PC-9 (cell line): ENCODE measurements at regions of chr10 and their contacts with region 1.

Region 1: DNA sequence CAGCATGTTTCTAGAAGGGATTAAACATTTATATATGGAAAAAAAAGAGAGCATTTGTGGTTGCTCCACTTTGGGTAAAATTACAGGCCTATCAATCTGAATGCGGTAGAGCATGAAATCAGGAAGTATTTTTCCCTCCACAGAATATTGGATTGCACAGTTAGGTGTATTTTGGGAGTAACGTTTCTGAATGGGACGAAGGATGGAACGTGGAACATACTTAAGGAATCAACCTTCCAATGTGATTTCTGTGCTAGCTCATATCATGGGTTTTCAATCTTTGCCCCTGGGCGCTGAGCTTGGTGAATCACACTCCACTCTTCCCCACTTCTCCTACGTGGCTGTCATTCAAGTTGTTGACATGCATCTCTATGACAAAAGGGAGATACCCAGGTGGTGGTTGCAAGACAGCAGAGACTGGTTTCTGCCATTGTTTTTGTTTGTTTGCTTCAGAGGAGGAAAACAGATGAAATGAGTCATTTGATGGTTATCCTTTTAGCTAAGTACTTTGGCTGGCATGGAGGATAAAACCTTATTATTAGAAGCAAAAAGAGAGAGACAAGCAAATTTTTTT is 573.8 kb downstream of the GATA3 start:
- DNase-seq: peak; percentile 88 to 97
- H3K4me3 ChIP-seq: no peak overlapping the region
- H3K27ac ChIP-seq: peak overlapping the region; percentile 88
- H3K4me1 ChIP-seq: peaks cover 25% of the 10 kb centered on the region
- H3K27me3 ChIP-seq: no peaks in the 10 kb centered on the region
- CTCF ChIP-seq: no peak

Region 2: DNA sequence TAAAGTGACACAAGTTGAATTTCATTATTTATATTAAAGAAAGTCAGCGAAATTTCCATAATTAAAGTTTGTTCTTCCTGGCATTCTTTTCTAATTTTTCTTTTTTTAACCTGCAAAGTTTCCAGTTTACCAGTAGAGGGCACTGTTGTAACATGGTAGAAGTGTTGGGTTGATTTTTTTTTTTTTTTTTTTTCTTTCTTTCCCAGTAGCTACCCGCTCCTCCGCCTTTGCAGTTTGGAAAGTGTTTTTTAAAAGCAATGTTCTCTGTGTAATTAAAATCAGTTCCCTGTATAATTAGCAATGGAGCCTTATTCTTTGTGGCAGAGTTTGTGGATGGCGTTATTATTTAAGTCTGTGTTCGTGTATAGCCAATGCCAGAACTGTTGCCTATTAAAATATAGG is 756.2 kb before region 1 on chr10:
- CTCF ChIA-PET with region 1: no interaction called
- POLR2A ChIA-PET with region 1: no interaction called
- intact Hi-C with region 1: loop called (anchors 5 kb)
- DNase-seq: peak in 1 of 2 experiments; percentile 5
- H3K4me3 ChIP-seq: peak overlapping the region; percentile 54; the same call in 1 of the 2 replicates
- H3K27ac ChIP-seq: no peak overlapping the region
- H3K4me1 ChIP-seq: peaks cover 8% of the 10 kb centered on the region
- H3K27me3 ChIP-seq: no peaks in the 10 kb centered on the region
- CTCF ChIP-seq: peak; percentile 74

Region 3: GRCh38 chr10:8404391-8405120 is 223.7 kb before region 1 on chr10:
- CTCF ChIA-PET with region 1: no interaction called
- POLR2A ChIA-PET with region 1: no interaction called
- intact Hi-C with region 1: loop called (anchors 1 kb)
- DNase-seq: peak; percentile 24 to 77
- H3K4me3 ChIP-seq: peak overlapping the region; percentile 15; the same call in 1 of the 2 replicates
- H3K27ac ChIP-seq: peak overlapping the region; percentile 83
- H3K4me1 ChIP-seq: peaks cover 35% of the 10 kb centered on the region
- H3K27me3 ChIP-seq: no peaks in the 10 kb centered on the region
- CTCF ChIP-seq: no peak

Region 4: GRCh38 chr10:8568401-8568800 is 59.9 kb before region 1 on chr10:
- CTCF ChIA-PET with region 1: no interaction called
- POLR2A ChIA-PET with region 1: no interaction called
- intact Hi-C with region 1: no loop called
- DNase-seq: no peak
- H3K4me3 ChIP-seq: no peak overlapping the region
- H3K27ac ChIP-seq: no peak overlapping the region
- H3K4me1 ChIP-seq: no peaks in the 10 kb centered on the region
- H3K27me3 ChIP-seq: no peaks in the 10 kb centered on the region
- CTCF ChIP-seq: no peak

Region 5: GRCh38 chr10:8581536-8582267 is 46.6 kb before region 1 on chr10:
- CTCF ChIA-PET with region 1: no interaction called
- POLR2A ChIA-PET with region 1: no interaction called
- intact Hi-C with region 1: loop called (anchors 1 kb)
- DNase-seq: peak; percentile 67 to 91
- H3K4me3 ChIP-seq: peak overlapping the region; percentile 26; the same call in 1 of the 2 replicates
- H3K27ac ChIP-seq: peak overlapping the region; percentile 92
- H3K4me1 ChIP-seq: peaks cover 34% of the 10 kb centered on the region
- H3K27me3 ChIP-seq: no peaks in the 10 kb centered on the region
- CTCF ChIP-seq: no peak

Region 6: DNA sequence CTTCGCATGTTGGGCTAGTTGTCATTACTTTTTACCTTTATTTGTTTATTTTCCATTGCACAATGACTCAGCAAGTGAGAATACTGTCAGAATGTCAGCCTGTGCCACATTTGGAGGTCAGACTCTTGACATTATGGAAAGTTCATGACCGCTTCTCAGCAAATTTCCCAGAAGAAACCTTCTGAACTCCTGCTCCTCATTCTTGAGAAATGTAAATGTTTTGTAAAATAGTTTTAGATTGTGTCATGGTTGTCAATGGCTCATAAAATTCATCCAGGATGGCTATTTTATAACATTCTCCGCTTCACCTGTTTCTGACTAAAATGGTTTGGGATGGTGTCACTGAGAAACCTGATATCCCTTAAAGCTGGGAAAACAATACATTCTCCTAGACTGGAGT is 97.8 kb after region 1 on chr10:
- CTCF ChIA-PET with region 1: no interaction called
- POLR2A ChIA-PET with region 1: no interaction called
- intact Hi-C with region 1: loop called (anchors 1 kb)
- DNase-seq: peak; percentile 31 to 92
- H3K4me3 ChIP-seq: no peak overlapping the region
- H3K27ac ChIP-seq: peak overlapping the region; percentile 99
- H3K4me1 ChIP-seq: peaks cover 46% of the 10 kb centered on the region
- H3K27me3 ChIP-seq: no peaks in the 10 kb centered on the region
- CTCF ChIP-seq: no peak